PC-3 (cell line): ENCODE measurements at regions of chr3 and their contacts with region 1.

Region 1: GRCh38 chr3:101827211-101828174 is 21.8 kb upstream of the NFKBIZ start:
- DNase-seq: peak; percentile 65
- ATAC-seq: peak; percentile 75
- H3K4me3 ChIP-seq: peak overlapping the region; percentile 76
- H3K27ac ChIP-seq: peak overlapping the region; percentile 79
- H3K4me1 ChIP-seq: peaks cover 20% of the 10 kb centered on the region
- H3K27me3 ChIP-seq: no peaks in the 10 kb centered on the region
- CTCF ChIP-seq: no peak

Region 2: GRCh38 chr3:101703169-101703568 is 124.3 kb before region 1 on chr3:
- CTCF ChIA-PET with region 1: no interaction called
- POLR2A ChIA-PET with region 1: no interaction called
- intact Hi-C with region 1: no loop called
- DNase-seq: peak; percentile 82
- ATAC-seq: peak; percentile 96
- H3K4me3 ChIP-seq: no peak overlapping the region
- H3K27ac ChIP-seq: peak overlapping the region; percentile 76
- H3K4me1 ChIP-seq: peaks cover 17% of the 10 kb centered on the region
- H3K27me3 ChIP-seq: no peaks in the 10 kb centered on the region
- CTCF ChIP-seq: no peak

Region 3: DNA sequence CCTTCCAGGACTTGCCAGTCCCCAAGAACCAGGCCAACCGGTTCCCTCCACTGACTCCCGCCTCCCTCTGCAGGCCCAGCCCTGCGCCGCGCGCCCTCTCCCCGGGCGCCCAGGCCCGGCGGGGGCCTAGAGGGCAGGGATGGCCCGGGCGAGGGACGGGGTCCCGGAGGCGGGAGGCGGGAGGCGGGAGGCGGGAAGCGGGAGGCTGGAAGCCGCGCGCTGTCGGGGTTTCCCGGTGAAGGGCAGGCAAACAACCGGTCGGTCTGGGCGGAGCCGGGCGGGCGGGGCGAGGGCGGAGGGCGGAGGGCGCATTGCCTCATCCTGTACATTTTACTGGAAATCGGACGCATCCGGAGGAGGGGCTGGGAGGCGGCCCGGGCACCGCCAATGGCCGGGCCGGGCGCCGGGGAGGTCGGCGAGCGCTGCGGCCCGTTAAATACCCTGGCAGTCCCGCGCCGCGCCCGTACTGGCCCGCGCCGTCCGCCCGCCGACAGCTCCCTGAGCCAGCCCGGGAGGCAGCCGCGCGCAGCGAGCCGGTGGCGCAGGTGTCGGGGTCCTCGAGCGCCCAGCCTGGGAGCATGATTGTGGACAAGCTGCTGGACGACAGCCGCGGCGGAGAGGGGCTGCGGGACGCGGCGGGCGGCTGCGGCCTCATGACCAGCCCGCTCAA is 21.7 kb after region 1 on chr3 and contains the start of gene NFKBIZ:
- CTCF ChIA-PET with region 1: interaction called, 3 read pairs
- POLR2A ChIA-PET with region 1: interaction called, 6 read pairs
- intact Hi-C with region 1: loop called (anchors 2 kb)
- DNase-seq: peak; percentile 95
- ATAC-seq: peak; percentile 77
- H3K4me3 ChIP-seq: peak within 1 kb of the TSS; percentile 98
- H3K27ac ChIP-seq: peak within 1 kb of the TSS; percentile 76
- H3K4me1 ChIP-seq: peaks cover 23% of the 10 kb centered on the region
- H3K27me3 ChIP-seq: no peaks in the 10 kb centered on the region
- CTCF ChIP-seq: no peak
- total RNA-seq, gene NFKBIZ: 63.0 and 70.2 TPM in 2 replicates